ENCODE measurements at regions of chr4 and their contacts with region 1.

Region 1: DNA sequence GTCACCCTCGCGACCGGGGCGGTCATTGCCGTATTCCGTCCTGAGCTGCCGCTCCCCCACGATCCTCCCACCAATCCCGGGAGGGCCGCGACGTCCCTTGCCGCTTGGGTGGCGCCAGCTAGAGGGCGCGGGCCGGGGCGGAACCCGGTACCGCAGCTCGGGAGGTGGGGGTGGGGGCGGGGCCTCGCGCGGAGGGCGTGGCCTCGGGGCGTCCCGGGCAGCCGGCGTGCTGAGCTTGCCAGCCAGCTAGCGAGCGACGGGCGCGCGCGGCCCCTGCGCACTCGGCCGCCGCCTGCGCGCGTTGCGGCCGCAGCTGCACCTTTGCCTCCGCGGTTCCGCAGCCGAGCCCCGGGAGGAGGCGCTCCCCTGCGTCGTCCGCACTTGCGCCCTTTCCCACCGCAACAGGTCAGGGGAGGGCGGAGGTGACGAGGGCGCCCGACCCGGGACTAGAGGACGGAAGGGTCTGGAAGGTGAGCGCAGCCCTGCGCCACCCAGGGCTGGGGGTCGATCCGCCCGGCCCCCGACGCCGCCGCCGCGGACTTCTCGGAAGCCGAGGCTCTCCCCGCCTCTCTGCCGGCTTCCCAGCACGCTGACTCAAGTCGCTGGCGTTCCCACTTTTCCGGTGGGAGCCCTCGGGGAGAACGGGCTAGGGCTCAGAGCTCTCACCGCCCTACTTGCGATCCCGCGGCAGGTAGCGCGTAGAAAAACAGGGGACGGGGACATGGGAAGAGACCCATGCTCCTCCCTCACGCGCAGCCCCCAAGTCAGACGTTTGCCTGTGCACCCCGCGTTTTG is at the start of gene AFF1:
- DNase-seq: peak; percentile 88

Region 2: GRCh38 chr4:85555206-85555605 is 1379.8 kb before region 1 on chr4:
- in situ Hi-C with region 1: no loop called
- DNase-seq: no peak

Region 3: GRCh38 chr4:87093443-87094123 is 158.6 kb after region 1 on chr4:
- in situ Hi-C with region 1: loop called (anchors 25 kb)
- DNase-seq: peak; percentile 74

Region 4: DNA sequence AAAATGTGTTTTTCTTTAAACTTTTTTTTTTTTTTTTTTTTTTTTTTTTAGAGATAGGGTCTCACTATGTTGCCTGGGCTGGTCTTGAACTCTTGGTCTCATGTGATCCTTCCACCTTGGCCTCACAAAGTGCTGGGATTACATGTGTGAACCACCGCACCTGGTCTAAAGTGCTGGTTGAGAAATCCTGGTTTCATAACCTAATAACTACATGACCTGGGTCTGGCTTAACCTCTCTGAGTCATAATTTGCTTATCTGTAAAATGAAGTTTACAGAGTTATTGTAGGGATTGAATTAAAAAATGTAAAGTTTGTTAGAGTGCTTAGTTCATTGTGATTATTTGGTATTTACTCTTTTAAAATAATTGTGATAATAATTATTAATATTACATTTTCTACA is 382.6 kb after region 1 on chr4:
- in situ Hi-C with region 1: no loop called
- DNase-seq: no peak

Measured in KBM-7 (cell line).